ENCODE measurements at regions of chr2 and their contacts with region 1.

Region 1: GRCh38 chr2:196758474-196759377 is 40.8 kb downstream of the GTF3C3 start:
- DNase-seq: no peak
- ATAC-seq: peak in 3 of 4 donors; percentile 57 to 81 (median 58)
- H3K4me3 ChIP-seq: no peak overlapping the region
- H3K27ac ChIP-seq: no peak overlapping the region
- H3K4me1 ChIP-seq: peaks cover 0 to 11% (median 0%) of the 10 kb centered on the region in 12 donors
- H3K27me3 ChIP-seq: no peaks in the 10 kb centered on the region
- CTCF ChIP-seq: peak in 11 of 12 donors; percentile 26 to 57 (median 40)
- POLR2A ChIP-seq: no peak

Region 2: GRCh38 chr2:196088203-196088602 is 670.5 kb before region 1 on chr2:
- intact Hi-C with region 1: loop called in 1 of 10 experiments (anchors 5 kb)
- DNase-seq: peak in 1 of 5 donors; percentile 32
- ATAC-seq: peak in 1 of 4 donors; percentile 26
- H3K4me3 ChIP-seq: no peak overlapping the region
- H3K27ac ChIP-seq: no peak overlapping the region
- H3K4me1 ChIP-seq: peaks cover 0 to 2% (median 0%) of the 10 kb centered on the region in 12 donors
- H3K27me3 ChIP-seq: no peaks in the 10 kb centered on the region
- CTCF ChIP-seq: no peak
- POLR2A ChIP-seq: no peak

Region 3: DNA sequence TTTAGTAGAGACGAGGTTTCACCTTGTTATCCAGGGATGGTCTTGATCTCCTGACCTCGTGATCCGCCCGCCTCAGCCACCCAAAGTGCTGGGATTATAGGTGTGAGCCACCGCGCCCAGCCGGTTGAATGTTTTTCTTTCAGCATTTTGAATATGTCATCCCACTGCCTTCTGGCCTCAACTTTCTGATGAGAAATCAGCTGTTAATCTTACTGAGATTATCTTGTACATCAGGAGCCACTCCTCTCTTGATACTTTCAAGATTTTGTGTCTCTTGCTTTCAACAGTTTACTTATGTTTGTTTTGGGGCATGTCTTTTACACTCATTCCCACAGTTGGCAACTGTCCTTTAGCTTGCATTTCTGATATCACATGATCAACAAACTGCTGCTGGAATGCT is 72.9 kb before region 1 on chr2:
- intact Hi-C with region 1: no loop called
- DNase-seq: no peak
- ATAC-seq: no peak
- H3K4me3 ChIP-seq: no peak overlapping the region
- H3K27ac ChIP-seq: no peak overlapping the region
- H3K4me1 ChIP-seq: no peaks in the 10 kb centered on the region
- H3K27me3 ChIP-seq: no peaks in the 10 kb centered on the region
- CTCF ChIP-seq: no peak
- POLR2A ChIP-seq: no peak

Region 4: DNA sequence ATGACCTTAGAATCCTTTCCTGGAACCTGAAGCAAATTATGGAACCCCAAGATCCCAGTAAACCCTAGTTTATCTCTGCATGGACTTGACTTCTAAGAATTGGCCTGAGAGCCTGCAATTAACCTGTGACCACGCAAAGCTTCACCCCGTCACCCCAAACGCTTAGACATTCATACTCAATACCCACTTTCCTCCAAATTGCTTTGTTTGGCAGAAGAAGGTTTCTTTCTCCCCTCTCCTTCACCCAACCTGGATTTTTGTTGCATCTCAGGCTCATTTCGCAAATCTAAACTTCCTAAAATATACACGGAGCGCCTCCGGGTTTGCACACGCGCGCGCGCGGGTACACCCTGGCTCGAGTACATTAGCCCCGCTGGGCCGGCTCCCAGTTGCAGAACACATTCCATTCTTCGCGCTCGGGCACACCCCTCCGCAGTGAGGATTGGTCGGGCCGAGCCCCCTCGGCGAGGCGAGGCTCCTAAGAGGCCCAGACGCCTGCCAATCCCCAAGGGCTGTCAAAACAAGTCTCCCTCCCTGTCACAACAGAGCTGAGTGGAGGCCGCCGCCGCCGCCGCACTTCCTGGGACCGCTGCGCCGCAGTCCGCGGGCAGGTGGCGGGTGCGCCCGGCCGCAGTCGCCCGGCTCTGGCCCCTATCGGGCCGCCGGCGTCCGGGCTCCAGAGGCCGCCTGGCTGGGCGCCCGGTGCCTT is 1045.5 kb after region 1 on chr2 and contains the start of gene PLCL1:
- intact Hi-C with region 1: no loop called
- DNase-seq: peak; percentile 93 to 97 (median 95)
- ATAC-seq: peak; percentile 94 to 97 (median 96)
- H3K4me3 ChIP-seq: peak within 1 kb of the TSS; percentile 66 to 91 (median 84)
- H3K27ac ChIP-seq: peak within 1 kb of the TSS; percentile 70 to 90 (median 84)
- H3K4me1 ChIP-seq: peaks cover 0 to 35% (median 16%) of the 10 kb centered on the region in 12 donors
- H3K27me3 ChIP-seq: peaks cover 0 to 7% (median 0%) of the 10 kb centered on the region in 9 donors
- CTCF ChIP-seq: peak in 7 of 12 donors; percentile 17 to 42 (median 27)
- POLR2A ChIP-seq: peak; percentile 36 to 98
- total RNA-seq, gene PLCL1: 65.9 to 126 (median 97.6) TPM